ENCODE measurements at regions of chr6 and their contacts with region 1.

Region 1: GRCh38 chr6:145963216-145964068 is 716 bp downstream of the SHPRH start:
- DNase-seq: peak in 1 of 5 donors; percentile 58
- ATAC-seq: peak; percentile 24 to 63 (median 52)
- H3K4me3 ChIP-seq: peak overlapping the region; percentile 67 to 96 (median 80)
- H3K27ac ChIP-seq: peak overlapping the region; percentile 70 to 92 (median 88)
- H3K4me1 ChIP-seq: peaks cover 0 to 44% (median 30%) of the 10 kb centered on the region in 12 donors
- H3K27me3 ChIP-seq: no peaks in the 10 kb centered on the region
- CTCF ChIP-seq: no peak
- POLR2A ChIP-seq: no peak

Region 2: DNA sequence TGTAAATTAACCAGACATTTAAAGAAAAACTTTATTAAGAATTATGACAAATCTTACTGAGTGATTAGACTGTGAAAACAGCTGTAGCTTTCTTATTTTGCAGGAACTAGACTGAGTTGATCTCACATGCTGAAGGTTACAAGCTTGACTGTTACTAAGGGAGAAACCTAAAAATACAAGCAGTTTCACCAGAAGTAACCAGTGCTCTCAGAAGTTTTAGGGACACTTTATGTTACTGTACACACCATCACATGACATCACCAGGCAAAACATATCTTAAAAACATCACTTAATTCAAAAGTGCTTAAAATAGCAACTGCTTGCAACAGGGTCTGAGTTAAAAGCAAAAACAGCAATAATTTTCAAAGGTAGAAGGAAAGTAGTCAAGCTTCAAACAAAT is 154.2 kb before region 1 on chr6:
- intact Hi-C with region 1: loop called in 3 of 10 experiments (anchors 10 kb)
- DNase-seq: no peak
- ATAC-seq: no peak
- H3K4me3 ChIP-seq: no peak overlapping the region
- H3K27ac ChIP-seq: peak overlapping the region in 4 of 12 donors; percentile 5 to 50 (median 24)
- H3K4me1 ChIP-seq: peaks cover 0 to 55% (median 42%) of the 10 kb centered on the region in 12 donors
- H3K27me3 ChIP-seq: no peaks in the 10 kb centered on the region
- CTCF ChIP-seq: no peak
- POLR2A ChIP-seq: no peak

Region 3: GRCh38 chr6:146277142-146277541 is 313.7 kb after region 1 on chr6:
- intact Hi-C with region 1: loop called in 1 of 10 experiments (anchors 10 kb)
- DNase-seq: no peak
- ATAC-seq: no peak
- H3K4me3 ChIP-seq: no peak overlapping the region
- H3K27ac ChIP-seq: no peak overlapping the region
- H3K4me1 ChIP-seq: peaks cover 0 to 15% (median 0%) of the 10 kb centered on the region in 12 donors
- H3K27me3 ChIP-seq: no peaks in the 10 kb centered on the region
- CTCF ChIP-seq: no peak
- POLR2A ChIP-seq: no peak

Region 4: GRCh38 chr6:146700078-146700686 is 736.7 kb after region 1 on chr6:
- intact Hi-C with region 1: loop called in 1 of 10 experiments (anchors 10 kb)
- DNase-seq: peak in 4 of 5 donors; percentile 66 to 80 (median 74)
- ATAC-seq: peak in 3 of 4 donors; percentile 65 to 69 (median 66)
- H3K4me3 ChIP-seq: no peak overlapping the region
- H3K27ac ChIP-seq: no peak overlapping the region
- H3K4me1 ChIP-seq: peaks cover 0 to 3% (median 0%) of the 10 kb centered on the region in 12 donors
- H3K27me3 ChIP-seq: no peaks in the 10 kb centered on the region
- CTCF ChIP-seq: peak; percentile 59 to 86 (median 76)
- POLR2A ChIP-seq: no peak

Measured in heart left ventricle (tissue), 16 donors.